Panc1 (cell line): ENCODE measurements at regions of chr10 and their contacts with region 1.

Region 1: GRCh38 chr10:107671960-107672359 is 507.5 kb upstream of the SORCS1 start:
- DNase-seq: no peak
- ATAC-seq: no peak
- H3K4me3 ChIP-seq: no peak overlapping the region
- H3K27ac ChIP-seq: no peak overlapping the region
- H3K4me1 ChIP-seq: no peaks in the 10 kb centered on the region
- H3K27me3 ChIP-seq: no peaks in the 10 kb centered on the region
- CTCF ChIP-seq: no peak

Region 2: GRCh38 chr10:107409522-107409921 is 262.4 kb before region 1 on chr10:
- CTCF ChIA-PET with region 1: no interaction called
- POLR2A ChIA-PET with region 1: no interaction called
- in situ Hi-C with region 1: no loop called
- intact Hi-C with region 1: no loop called
- DNase-seq: no peak
- ATAC-seq: no peak
- H3K4me3 ChIP-seq: no peak overlapping the region
- H3K27ac ChIP-seq: no peak overlapping the region
- H3K4me1 ChIP-seq: no peaks in the 10 kb centered on the region
- H3K27me3 ChIP-seq: no peaks in the 10 kb centered on the region
- CTCF ChIP-seq: peak; percentile 30; the same call in 1 of the 2 replicates

Region 3: DNA sequence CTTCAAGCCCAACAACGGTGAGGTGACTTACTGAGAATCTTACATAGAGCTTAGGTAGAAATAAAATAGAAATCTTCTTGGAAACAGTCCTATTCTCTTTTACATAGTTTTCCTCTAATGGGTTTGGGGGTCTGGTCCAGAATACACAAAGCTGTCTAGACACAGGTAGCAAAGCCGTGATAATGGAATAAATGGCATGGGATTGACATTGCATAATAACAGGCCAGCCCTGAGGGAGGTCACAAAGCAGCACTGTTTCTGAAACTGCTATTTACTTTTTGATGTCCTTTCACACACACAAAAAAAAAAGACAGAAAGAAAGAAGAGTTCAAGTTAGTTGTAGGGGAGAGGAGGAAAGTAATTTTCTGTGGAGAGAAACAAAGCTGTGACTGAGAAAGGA is 142.6 kb before region 1 on chr10:
- CTCF ChIA-PET with region 1: no interaction called
- POLR2A ChIA-PET with region 1: interaction called, 10 read pairs
- in situ Hi-C with region 1: no loop called
- intact Hi-C with region 1: no loop called
- DNase-seq: no peak
- ATAC-seq: no peak
- H3K4me3 ChIP-seq: no peak overlapping the region
- H3K27ac ChIP-seq: no peak overlapping the region
- H3K4me1 ChIP-seq: no peaks in the 10 kb centered on the region
- H3K27me3 ChIP-seq: no peaks in the 10 kb centered on the region
- CTCF ChIP-seq: no peak